Spleen (tissue), 13 donors: ENCODE measurements at regions of chr17 and their contacts with region 1.

Region 1: DNA sequence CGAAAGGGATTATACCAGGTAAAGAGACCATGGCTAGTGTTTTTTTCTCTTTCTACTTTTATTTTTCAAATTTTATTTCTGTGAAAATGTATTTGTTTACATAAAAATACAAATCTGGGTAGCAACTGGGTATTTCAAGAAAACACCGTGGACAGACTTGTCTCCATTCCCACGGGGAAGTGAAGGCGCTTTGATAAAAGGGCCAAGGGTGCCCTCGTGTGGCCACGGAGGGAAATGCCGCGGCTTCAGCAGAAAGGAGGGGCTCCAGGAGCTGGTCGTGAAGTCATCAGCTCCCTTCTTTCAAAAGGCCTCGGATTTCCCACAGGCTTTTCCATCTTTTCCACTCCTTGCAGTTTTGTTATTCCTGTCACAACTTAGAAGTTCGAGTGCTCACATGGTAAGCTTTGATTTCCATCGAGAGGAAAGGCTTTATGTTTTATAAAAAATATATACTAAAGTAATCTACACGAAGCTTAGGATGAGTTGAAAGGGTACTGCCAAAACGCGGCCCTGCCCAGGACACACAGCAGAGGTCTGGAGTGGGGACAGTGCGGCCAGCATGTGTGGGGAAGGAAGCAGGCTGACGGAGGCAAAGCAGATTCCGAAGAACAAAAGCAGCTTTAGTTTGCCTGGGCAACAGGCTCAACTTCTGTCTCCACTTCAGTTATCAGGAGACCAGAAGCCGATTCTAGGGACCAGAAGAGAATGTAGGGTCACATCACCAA is 15.3 kb upstream of the MNT start:
- DNase-seq: peak; percentile 94
- H3K4me3 ChIP-seq: no peak overlapping the region
- H3K27ac ChIP-seq: peak overlapping the region in 2 of 8 donors; percentile 6 to 9
- H3K4me1 ChIP-seq: peaks cover 8 to 36% (median 17%) of the 10 kb centered on the region in 6 donors
- H3K27me3 ChIP-seq: no peaks in the 10 kb centered on the region
- CTCF ChIP-seq: peak; percentile 92 to 100 (median 98)
- POLR2A ChIP-seq: no peak

Region 2: DNA sequence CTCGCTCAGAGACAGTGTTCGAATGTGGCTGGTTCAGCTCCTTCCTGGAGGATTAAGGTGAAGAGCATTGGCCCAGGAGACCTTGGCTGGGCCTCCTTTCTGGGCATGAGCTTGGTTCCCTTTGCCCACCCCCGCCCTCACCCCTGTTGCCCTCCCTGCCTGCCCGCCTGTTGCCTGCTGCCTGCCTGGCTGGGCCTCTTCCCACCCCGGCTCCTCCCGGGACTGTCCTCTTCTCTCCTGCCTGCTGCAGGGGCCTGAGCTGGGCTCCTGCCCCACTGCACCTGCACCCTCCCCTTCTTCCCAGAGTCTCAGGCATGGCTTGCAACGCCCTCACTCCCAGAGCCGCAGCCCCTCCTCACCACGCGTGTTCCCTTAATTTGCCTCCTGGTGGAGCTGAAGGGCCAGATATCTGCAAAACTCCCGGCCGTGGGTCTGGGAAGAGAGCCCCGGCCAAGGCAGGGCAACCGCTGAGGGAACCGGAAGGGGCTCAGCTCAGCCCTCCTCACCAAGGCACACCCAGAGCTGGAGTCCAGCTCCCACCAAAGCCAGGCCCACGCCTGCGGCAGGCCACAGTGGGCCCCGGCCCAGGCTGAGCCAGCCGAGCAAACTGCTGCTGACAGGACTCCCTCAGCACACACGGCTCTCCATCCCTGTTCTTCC is 46.5 kb before region 1 on chr17:
- intact Hi-C with region 1: loop called (anchors 10 kb)
- DNase-seq: no peak
- H3K4me3 ChIP-seq: no peak overlapping the region
- H3K27ac ChIP-seq: no peak overlapping the region
- H3K4me1 ChIP-seq: peaks cover 0 to 17% (median 0%) of the 10 kb centered on the region in 6 donors
- H3K27me3 ChIP-seq: no peaks in the 10 kb centered on the region
- CTCF ChIP-seq: no peak
- POLR2A ChIP-seq: no peak

Region 3: DNA sequence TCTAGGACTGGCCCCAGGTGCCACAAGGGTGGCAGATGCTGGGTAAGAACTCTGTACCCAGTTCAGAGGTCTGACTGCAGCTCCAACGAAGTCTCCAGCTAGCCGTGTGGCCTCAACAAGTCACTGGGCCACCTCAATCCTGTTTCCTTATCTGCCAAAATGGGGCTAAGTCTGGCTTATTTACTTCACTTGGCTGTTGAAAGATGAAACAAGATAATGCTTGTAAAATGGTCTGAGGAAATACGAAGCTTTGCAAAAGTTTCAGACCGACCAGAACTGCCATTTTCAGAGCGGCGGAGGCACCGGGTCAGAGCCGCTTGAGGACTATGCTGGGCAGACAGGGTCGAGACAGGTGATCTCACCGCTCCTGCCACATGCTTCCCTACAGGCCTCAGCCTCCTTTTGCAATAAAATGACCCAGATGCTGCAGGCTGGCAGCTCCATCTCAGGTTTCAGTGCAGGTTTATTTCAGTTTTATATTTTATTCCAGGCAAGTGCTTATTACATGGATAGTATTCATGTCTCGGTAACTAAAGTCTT is 32.5 kb before region 1 on chr17:
- intact Hi-C with region 1: loop called (anchors 2 kb)
- DNase-seq: no peak
- H3K4me3 ChIP-seq: no peak overlapping the region
- H3K27ac ChIP-seq: peak overlapping the region in 2 of 8 donors; percentile 55 to 69
- H3K4me1 ChIP-seq: peaks cover 6 to 65% (median 25%) of the 10 kb centered on the region in 6 donors
- H3K27me3 ChIP-seq: no peaks in the 10 kb centered on the region
- CTCF ChIP-seq: no peak
- POLR2A ChIP-seq: no peak